Activated CD8-positive, alpha-beta T cell treated with anti-CD3 and anti-CD28 coated beads, Interleukin-2, amount 10 ng/mL, durations not matched to agents 7 days and 5 days (primary cell): ENCODE measurements at regions of chr7 and their contacts with region 1.

Region 1: DNA sequence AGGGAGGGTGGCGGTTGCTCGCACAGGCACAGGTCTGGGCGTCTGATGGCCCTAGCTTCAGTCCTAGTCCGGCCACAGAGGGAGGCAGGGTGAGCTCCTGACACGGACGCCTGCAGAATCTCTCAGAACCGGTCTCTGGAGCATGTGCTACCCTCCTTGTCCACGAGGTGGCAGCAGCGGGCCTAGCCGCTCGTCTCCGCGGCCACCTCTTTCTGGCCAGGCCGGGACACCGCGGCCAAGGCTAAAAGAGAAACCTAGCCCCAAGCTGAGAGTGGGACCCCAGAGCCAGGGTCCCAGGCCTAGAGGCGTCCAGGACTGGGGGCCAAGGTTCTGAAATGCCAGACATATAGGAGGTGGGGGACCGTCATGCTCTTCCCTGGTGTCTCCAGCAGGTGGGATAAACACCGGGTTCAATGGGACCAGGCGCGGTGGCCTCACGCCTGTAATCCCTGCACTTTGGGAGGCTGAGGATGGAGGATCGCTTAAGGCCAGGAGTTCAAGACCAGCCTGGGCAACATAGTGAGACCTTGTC is 3.2 kb upstream of the LAT2 start:
- DNase-seq: peak; percentile 88
- ATAC-seq: peak; percentile 68
- H3K4me3 Mint-ChIP-seq: peak overlapping the region; percentile 31
- H3K27ac Mint-ChIP-seq: no peak overlapping the region
- H3K4me1 Mint-ChIP-seq: peaks cover 41% of the 10 kb centered on the region
- H3K27me3 Mint-ChIP-seq: no peaks in the 10 kb centered on the region

Region 2: GRCh38 chr7:73703757-73704639 is 502.7 kb before region 1 on chr7:
- CTCF ChIA-PET with region 1: no interaction called
- POLR2A ChIA-PET with region 1: no interaction called
- DNase-seq: peak; percentile 43
- ATAC-seq: peak; percentile 62
- H3K4me3 Mint-ChIP-seq: no peak overlapping the region
- H3K27ac Mint-ChIP-seq: no peak overlapping the region
- H3K4me1 Mint-ChIP-seq: peaks cover 2% of the 10 kb centered on the region
- H3K27me3 Mint-ChIP-seq: no peaks in the 10 kb centered on the region

Region 3: DNA sequence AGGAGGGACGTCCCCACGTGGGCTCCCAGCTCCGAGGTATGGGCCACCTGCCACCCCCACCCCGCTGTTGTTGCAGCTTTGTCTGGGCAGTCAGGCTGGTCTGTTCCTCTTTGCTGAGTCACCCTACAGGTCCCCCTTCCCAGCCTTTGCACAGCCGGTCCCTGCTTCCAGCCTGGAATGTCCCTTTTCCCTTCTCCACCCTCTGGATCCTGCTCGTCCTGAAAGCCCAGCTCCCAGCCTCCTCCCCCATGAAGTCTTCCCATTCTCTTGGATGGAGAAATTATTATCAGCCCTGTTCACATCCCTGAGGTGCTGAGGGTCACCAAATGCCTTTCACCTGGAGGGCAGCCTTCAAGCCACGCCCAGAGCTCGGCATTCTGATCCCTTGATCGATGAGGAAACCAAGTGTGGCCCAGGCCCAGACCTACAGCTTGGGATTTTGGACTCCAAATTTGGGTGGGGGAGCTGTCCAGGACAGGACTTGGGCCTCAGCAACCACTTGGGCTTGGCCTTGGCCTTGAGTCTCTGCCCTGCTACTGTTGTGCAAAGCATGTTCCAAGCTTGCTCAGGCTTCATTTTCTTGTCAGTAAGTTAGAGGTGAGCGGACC is 373.2 kb before region 1 on chr7:
- CTCF ChIA-PET with region 1: no interaction called
- POLR2A ChIA-PET with region 1: no interaction called
- DNase-seq: no peak
- ATAC-seq: no peak
- H3K4me3 Mint-ChIP-seq: no peak overlapping the region
- H3K27ac Mint-ChIP-seq: no peak overlapping the region
- H3K4me1 Mint-ChIP-seq: peaks cover 11% of the 10 kb centered on the region
- H3K27me3 Mint-ChIP-seq: no peaks in the 10 kb centered on the region

Region 4: DNA sequence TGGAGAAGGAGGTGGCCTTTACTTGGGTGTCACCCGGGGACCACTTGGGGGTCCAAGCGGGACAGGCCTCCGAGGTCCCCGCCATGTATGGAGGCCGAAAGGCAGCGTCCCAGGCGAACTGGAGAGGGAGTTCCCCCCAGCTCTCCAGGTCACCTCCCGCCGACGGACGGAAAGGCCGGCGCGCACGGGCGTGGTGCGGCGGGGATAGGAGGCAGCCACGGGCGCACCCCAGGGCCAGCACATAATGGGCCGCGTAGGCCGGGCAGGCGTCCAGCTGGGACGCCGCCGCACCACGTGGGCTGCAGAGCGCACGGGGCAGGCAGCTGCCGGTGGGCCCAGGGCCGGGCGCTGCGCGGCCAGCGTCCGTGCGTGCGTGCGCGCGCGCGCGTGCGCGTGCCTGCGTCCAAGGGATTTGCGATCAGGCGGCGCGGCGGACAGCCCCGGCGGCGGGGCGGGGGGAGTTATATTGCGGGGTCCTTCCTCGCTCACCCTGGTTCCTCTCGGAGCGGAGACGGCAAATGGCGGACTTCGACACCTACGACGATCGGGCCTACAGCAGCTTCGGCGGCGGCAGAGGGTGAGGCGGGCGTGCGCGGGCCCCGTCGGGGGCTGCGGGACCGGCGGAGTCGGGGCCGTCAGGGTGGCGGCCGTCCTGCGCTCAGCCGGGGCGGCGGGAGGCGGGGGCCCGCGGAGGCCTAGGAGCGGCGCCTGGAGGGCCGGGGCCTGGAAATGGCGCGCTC is 32.6 kb before region 1 on chr7 and contains the start of gene EIF4H:
- CTCF ChIA-PET with region 1: interaction called, 51 read pairs
- POLR2A ChIA-PET with region 1: interaction called, 3 read pairs
- DNase-seq: peak; percentile 95
- ATAC-seq: peak; percentile 87
- H3K4me3 Mint-ChIP-seq: peak within 1 kb of the TSS; percentile 87
- H3K27ac Mint-ChIP-seq: peak within 1 kb of the TSS; percentile 90
- H3K4me1 Mint-ChIP-seq: peaks cover 35% of the 10 kb centered on the region
- H3K27me3 Mint-ChIP-seq: no peaks in the 10 kb centered on the region
- total RNA-seq, gene EIF4H: 287 to 302 TPM

Region 5: GRCh38 chr7:74217455-74218342 is 11.0 kb after region 1 on chr7:
- CTCF ChIA-PET with region 1: interaction called, 46 read pairs
- POLR2A ChIA-PET with region 1: interaction called, 6 read pairs
- DNase-seq: peak; percentile 63
- ATAC-seq: peak; percentile 60
- H3K4me3 Mint-ChIP-seq: peak overlapping the region; percentile 49
- H3K27ac Mint-ChIP-seq: peak overlapping the region; percentile 96
- H3K4me1 Mint-ChIP-seq: peaks cover 42% of the 10 kb centered on the region
- H3K27me3 Mint-ChIP-seq: no peaks in the 10 kb centered on the region

Region 6: DNA sequence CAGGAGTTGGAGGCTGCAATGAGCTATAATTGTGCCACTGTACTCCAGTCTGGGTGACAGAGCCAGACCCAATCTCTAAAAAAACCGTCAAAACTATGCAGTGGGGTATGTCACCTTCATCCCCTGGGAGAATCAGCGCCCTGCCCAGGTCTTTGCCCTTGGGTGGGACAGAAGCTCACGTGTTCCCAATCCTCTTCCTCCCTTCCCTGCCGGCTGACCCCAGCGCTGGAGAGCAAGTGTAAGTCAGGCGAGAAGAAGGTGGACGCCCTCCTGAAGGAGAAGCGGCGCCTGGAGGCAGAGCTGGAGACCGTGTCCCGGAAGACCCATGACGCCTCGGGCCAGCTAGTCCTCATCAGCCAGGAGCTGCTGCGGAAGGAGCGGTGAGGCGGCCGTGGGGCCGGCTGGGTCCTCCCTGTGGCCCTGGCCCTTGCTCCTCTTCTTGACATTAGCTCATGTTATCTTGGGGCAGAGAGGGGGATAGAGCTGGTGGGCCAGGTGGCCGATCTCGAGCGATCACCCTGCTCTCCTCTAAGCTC is 182.3 kb after region 1 on chr7:
- CTCF ChIA-PET with region 1: interaction called, 12 read pairs
- POLR2A ChIA-PET with region 1: no interaction called
- DNase-seq: no peak
- ATAC-seq: no peak
- H3K4me3 Mint-ChIP-seq: no peak overlapping the region
- H3K27ac Mint-ChIP-seq: no peak overlapping the region
- H3K4me1 Mint-ChIP-seq: peaks cover 2% of the 10 kb centered on the region
- H3K27me3 Mint-ChIP-seq: no peaks in the 10 kb centered on the region

Region 7: DNA sequence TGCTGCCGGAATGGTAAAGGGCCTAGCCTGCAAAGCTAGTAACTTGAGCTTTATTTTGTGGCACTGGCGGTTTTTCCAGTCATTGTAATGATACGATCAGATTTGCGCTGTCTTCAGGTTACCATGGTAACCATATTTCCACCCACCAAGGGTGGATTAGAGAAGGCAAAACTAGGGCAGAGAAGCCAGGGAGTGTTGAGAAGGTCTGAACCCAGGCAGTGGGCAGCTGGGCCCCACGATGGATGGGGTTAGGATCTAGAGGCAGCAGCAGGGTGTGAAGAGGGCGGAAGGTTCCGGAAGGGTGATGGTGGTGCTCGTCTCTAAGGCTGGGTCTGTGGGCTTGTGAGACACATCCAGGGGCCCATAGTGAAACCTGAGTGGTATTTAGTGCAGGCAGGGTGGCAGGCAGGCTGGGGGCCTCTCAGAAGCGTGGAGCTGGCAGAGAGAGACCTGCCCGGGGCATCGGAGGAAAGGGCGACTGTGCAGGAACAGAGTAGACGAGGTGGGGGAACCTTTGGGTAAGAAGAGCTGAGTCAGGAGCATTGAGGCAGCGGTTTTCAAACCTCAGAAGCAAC is 362.9 kb after region 1 on chr7:
- CTCF ChIA-PET with region 1: no interaction called
- POLR2A ChIA-PET with region 1: no interaction called
- DNase-seq: no peak
- ATAC-seq: peak; percentile 21
- H3K4me3 Mint-ChIP-seq: no peak overlapping the region
- H3K27ac Mint-ChIP-seq: no peak overlapping the region
- H3K4me1 Mint-ChIP-seq: no peaks in the 10 kb centered on the region
- H3K27me3 Mint-ChIP-seq: no peaks in the 10 kb centered on the region